T-cell (primary cell): ENCODE measurements at regions of chr2 and their contacts with region 1.

Region 1: DNA sequence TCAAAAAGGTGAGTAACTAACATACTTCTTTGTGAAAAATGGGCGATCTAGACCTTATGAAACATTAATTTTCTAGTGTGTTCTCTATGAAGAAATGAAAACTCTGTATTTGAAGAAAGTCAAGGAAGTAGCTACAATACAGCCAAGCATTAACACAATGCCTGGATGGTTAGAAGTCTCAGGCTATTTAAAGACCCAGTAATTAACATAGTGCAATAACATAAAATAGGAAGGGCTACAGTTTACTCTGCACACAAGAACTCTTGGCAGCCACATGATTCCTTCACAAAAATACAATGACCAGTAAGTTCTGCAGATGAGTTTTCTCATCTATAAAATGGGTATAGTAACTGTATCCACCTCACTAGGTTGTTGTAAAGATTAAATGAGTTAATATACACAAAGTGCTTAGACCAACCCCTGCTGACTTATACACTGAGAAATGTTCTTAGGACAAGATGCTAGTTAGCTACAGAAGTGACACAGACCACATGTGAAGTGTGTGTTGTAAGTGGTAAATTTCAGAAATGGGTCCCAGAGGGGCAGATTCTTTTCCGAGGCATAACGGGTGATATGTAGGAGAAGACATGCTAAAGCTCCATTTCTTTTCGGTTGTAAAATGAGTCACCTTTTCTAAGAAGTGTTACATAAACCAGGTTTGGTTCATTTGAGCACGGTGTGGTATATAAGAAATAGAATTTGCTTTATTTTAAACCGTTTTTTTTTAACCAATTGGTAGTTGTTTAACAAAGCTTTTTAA is 61.8 kb downstream of the CXCR4 start:
- DNase-seq: no peak
- ATAC-seq: peak in 3 of 4 experiments; percentile 47 to 54 (median 54)
- H3K4me3 ChIP-seq: no peak overlapping the region
- H3K4me3 Mint-ChIP-seq: peak overlapping the region; percentile 1 to 57 (median 28)
- H3K27ac ChIP-seq: peak overlapping the region; percentile 65
- H3K27ac Mint-ChIP-seq: peak overlapping the region; percentile 89 to 92
- H3K4me1 ChIP-seq: peaks cover 15 to 56% of the 10 kb centered on the region in 2 experiments
- H3K4me1 Mint-ChIP-seq: peaks cover 80 to 89% (median 81%) of the 10 kb centered on the region in 3 donors
- H3K27me3 ChIP-seq: no peaks in the 10 kb centered on the region
- H3K27me3 Mint-ChIP-seq: no peaks in the 10 kb centered on the region

Region 2: GRCh38 chr2:135585586-135585985 is 470.5 kb before region 1 on chr2:
- CTCF ChIA-PET with region 1: interaction called, 6 to 13 read pairs
- POLR2A ChIA-PET with region 1: no interaction called
- DNase-seq: no peak
- ATAC-seq: no peak
- H3K4me3 ChIP-seq: no peak overlapping the region
- H3K4me3 Mint-ChIP-seq: no peak overlapping the region
- H3K27ac ChIP-seq: no peak overlapping the region
- H3K27ac Mint-ChIP-seq: no peak overlapping the region
- H3K4me1 ChIP-seq: peaks cover 0 to 21% of the 10 kb centered on the region in 2 experiments
- H3K4me1 Mint-ChIP-seq: peaks cover 29 to 52% (median 36%) of the 10 kb centered on the region in 3 donors
- H3K27me3 ChIP-seq: no peaks in the 10 kb centered on the region
- H3K27me3 Mint-ChIP-seq: no peaks in the 10 kb centered on the region

Region 3: DNA sequence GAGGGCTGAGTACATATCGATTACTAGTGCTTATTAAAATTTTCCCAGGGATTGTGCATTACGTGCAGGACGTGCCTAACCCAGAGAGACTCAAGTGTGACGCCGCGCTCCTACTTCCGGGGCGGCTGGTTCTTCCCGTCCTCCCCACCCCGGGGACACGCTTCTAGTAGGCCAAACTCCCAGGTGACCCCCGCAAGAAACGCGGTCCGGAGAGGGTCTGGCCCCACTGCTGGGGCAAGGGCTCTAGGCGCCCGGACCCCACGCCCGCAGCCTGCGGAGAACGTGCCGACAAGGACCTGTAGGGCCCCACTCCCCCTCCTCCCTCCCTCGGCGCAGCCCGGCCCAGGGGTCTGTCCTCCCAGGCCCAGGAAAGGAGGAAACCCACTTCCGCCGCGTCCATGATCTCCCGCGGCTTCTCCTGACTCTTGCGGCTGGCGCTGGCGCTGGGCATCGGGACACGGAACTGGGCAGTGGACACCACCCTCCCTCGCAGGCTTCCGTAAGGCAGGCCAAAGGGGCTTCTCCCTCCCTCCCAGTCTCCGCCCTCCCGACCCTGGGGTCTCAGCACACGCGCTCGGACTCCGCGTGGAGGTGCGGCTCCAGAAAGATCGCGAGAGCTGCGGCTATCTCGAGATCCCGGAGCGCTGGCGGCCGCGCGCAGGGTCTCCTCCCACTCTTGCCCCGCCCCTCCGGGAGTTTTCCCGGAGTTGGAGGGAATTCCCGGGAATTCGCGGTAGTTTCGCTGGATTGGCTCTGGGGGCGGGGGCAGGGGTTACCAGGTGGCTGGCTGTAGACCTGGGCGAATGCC is 70.9 kb before region 1 on chr2 and contains the start of gene DARS1:
- CTCF ChIA-PET with region 1: no interaction called
- POLR2A ChIA-PET with region 1: interaction called, 3 to 12 read pairs
- DNase-seq: peak; percentile 31 to 87 (median 67)
- ATAC-seq: peak; percentile 83 to 88 (median 84)
- H3K4me3 ChIP-seq: peak within 1 kb of the TSS; percentile 88 to 91
- H3K4me3 Mint-ChIP-seq: peak within 1 kb of the TSS; percentile 91 to 97 (median 92)
- H3K27ac ChIP-seq: peak within 1 kb of the TSS; percentile 96
- H3K27ac Mint-ChIP-seq: peak within 1 kb of the TSS; percentile 99
- H3K4me1 ChIP-seq: peaks cover 8 to 13% of the 10 kb centered on the region in 2 experiments
- H3K4me1 Mint-ChIP-seq: peaks cover 48 to 51% (median 49%) of the 10 kb centered on the region in 3 donors
- H3K27me3 ChIP-seq: no peaks in the 10 kb centered on the region
- H3K27me3 Mint-ChIP-seq: no peaks in the 10 kb centered on the region
- total RNA-seq, gene DARS1: 48.2 to 77.4 (median 69.4) TPM

Region 4: GRCh38 chr2:135997380-135997779 is 58.7 kb before region 1 on chr2:
- CTCF ChIA-PET with region 1: no interaction called
- POLR2A ChIA-PET with region 1: no interaction called
- DNase-seq: peak in 5 of 35 experiments; percentile 5 to 21 (median 14)
- ATAC-seq: peak; percentile 42 to 57 (median 50)
- H3K4me3 ChIP-seq: no peak overlapping the region
- H3K4me3 Mint-ChIP-seq: no peak overlapping the region
- H3K27ac ChIP-seq: no peak overlapping the region
- H3K27ac Mint-ChIP-seq: no peak overlapping the region
- H3K4me1 ChIP-seq: peaks cover 0 to 5% of the 10 kb centered on the region in 2 experiments
- H3K4me1 Mint-ChIP-seq: peaks cover 14 to 29% (median 22%) of the 10 kb centered on the region in 3 donors
- H3K27me3 ChIP-seq: no peaks in the 10 kb centered on the region
- H3K27me3 Mint-ChIP-seq: no peaks in the 10 kb centered on the region

Region 5: GRCh38 chr2:136068581-136069227 is 12.6 kb after region 1 on chr2:
- CTCF ChIA-PET with region 1: no interaction called
- POLR2A ChIA-PET with region 1: no interaction called
- DNase-seq: peak in 2 of 35 experiments; percentile 10 to 29
- ATAC-seq: peak; percentile 48 to 78 (median 76)
- H3K4me3 ChIP-seq: no peak overlapping the region
- H3K4me3 Mint-ChIP-seq: peak overlapping the region; percentile 10 to 51 (median 18)
- H3K27ac ChIP-seq: peak overlapping the region; percentile 3
- H3K27ac Mint-ChIP-seq: peak overlapping the region; percentile 91 to 96
- H3K4me1 ChIP-seq: peaks cover 0 to 14% of the 10 kb centered on the region in 2 experiments
- H3K4me1 Mint-ChIP-seq: peaks cover 40 to 49% (median 44%) of the 10 kb centered on the region in 3 donors
- H3K27me3 ChIP-seq: no peaks in the 10 kb centered on the region
- H3K27me3 Mint-ChIP-seq: no peaks in the 10 kb centered on the region